AG04450 (cell line): ENCODE measurements at regions of chr20 and their contacts with region 1.

Region 1: GRCh38 chr20:41232973-41233926 is 84.3 kb downstream of the ZHX3 start:
- DNase-seq: peak; percentile 86
- H3K4me3 ChIP-seq: no peak overlapping the region
- H3K27ac ChIP-seq: peak overlapping the region; percentile 86
- H3K27me3 ChIP-seq: no peaks in the 10 kb centered on the region
- CTCF ChIP-seq: no peak

Region 2: DNA sequence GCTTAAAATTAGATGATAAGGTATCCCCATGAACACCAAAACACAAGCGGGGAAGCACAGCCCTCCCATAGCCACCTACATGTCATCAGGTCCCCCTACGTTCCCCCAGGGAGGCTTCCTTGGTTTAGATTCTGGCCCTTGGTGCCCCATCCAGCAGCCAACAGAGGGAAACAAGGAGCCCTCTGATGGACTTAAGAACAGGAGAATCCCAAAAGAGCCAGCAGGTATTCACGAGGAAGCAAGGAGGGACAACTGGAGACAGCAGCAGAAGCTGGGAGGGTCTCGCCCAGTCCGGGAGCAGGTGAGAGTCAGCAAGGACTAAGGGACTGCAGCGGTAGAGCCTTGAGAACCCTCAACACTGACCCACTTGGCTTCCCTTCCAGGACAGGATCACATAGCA is 263.0 kb before region 1 on chr20:
- CTCF ChIA-PET with region 1: interaction called, 12 read pairs
- POLR2A ChIA-PET with region 1: no interaction called
- DNase-seq: no peak
- H3K4me3 ChIP-seq: no peak overlapping the region
- H3K27ac ChIP-seq: no peak overlapping the region
- H3K27me3 ChIP-seq: no peaks in the 10 kb centered on the region
- CTCF ChIP-seq: peak; percentile 28; the same call in 1 of the 2 replicates

Region 3: DNA sequence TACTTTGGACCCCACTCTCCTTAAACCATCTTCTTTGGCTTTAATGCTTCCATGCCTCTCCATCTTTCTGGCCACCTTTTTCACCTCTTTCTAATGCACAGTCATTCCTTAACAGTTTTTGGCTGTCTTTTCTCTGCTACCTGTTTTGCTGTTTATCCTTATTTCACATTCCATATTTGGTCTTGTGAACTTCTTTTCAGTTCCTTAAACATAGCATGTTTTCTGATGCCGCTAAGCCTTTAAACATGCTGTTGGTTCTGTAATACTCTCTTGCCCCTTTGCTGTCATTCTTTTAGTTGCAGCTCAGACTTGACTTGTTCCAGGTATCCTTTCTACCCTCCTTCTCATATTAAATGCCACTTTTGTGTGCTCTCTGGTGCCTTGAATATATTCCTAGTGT is 168.9 kb before region 1 on chr20:
- CTCF ChIA-PET with region 1: no interaction called
- POLR2A ChIA-PET with region 1: no interaction called
- DNase-seq: no peak
- H3K4me3 ChIP-seq: no peak overlapping the region
- H3K27ac ChIP-seq: no peak overlapping the region
- H3K27me3 ChIP-seq: no peaks in the 10 kb centered on the region
- CTCF ChIP-seq: no peak

Region 4: DNA sequence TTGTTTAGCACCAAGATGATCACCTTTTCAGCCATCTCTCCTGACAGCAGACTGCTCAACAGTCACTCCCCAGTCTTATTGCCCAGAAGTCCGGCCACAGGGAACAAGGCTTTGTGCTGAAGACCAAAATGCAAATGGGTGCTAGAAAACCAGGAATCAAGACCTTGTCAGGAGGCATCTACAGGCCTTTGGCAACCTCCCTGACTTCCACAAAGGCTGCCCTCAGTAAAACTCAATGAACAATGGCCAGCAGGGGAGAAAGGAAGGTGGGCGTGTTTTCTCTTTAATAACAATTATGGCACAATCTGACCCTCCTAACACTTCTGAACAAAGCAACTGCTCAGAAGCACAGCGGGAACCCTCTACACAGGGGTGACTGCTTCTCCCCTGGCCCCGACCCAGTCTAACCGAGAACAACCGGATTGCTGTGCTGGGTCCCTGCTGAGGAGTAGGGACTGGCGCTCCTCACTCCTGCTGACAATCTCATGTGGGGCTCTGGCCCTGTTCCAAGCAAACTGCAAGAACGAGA is 54.3 kb before region 1 on chr20:
- CTCF ChIA-PET with region 1: interaction called, 13 read pairs
- POLR2A ChIA-PET with region 1: interaction called, 6 read pairs
- DNase-seq: no peak
- H3K4me3 ChIP-seq: no peak overlapping the region
- H3K27ac ChIP-seq: no peak overlapping the region
- H3K27me3 ChIP-seq: no peaks in the 10 kb centered on the region
- CTCF ChIP-seq: no peak

Region 5: DNA sequence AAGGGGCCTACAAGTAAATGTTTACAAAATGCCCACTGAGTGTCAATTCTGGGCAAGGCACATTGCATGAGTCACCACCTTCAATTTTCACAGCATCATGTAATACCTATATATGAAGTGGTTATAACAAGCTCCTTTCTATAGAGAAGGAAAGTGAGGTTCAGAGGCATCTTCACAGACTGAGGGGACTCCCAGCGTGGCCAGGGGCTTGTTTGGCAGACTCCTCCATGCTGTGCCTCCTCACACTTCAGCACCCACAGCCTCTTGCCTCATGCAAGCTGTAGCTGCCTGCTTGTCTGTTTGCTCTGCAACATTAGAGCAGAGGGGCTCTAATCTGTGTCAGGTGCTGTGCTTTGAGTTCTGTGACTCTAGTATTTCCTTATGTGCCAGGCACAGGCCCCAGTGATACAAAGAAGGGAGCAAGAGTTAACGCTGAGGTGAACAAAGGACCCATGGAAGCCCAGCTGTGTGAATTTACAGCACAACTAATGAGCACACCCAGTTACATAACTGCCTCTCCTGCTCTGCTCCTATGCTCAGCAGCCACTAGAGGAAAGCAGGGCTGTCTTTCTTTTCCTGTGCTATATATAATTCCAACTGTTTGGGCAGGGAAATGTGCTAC is 11.9 kb after region 1 on chr20:
- CTCF ChIA-PET with region 1: interaction called, 21 read pairs
- POLR2A ChIA-PET with region 1: interaction called, 5 read pairs
- DNase-seq: no peak
- H3K4me3 ChIP-seq: no peak overlapping the region
- H3K27ac ChIP-seq: no peak overlapping the region
- H3K27me3 ChIP-seq: no peaks in the 10 kb centered on the region
- CTCF ChIP-seq: peak; percentile 14; the same call in 1 of the 2 replicates

Region 6: DNA sequence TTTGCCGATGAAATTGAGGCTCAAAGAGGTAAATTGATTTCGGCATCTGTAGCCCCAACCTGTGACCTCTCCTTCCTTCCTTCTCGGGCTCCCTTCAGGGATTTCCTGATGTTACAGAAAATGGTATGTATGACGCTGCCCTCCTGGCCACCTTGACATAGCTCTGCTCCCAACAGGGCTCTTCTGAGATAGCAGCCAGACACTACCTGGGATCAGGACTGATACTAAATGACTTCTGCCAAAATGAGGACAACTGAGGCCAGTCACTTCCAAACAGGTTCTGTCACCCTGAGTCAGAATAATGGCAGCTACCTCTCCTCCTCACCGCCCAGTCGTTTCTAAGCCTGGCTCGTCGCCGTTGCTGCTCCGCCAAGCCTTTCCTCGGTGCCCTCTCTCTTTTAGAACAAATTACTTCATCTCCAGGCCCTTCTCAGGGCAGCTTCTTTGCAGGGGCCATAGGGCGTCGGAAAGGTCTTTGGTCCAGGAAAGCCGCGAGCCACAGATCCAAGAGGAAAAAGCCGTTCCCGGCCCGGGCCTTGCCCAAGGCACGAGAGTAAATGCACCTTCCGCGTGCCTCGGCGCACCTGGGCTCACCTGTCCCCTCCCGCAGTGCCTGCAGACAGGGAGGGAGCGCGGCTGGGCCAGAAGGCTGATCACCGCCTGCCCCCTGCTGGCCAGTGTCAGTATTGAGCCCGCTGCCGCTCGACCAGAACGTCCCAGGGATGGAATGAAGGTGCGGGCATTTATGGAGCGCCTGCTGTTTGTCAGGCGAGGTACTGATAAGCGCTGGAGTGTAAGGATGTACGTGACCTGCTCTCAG is 106.5 kb after region 1 on chr20:
- CTCF ChIA-PET with region 1: interaction called, 26 read pairs
- POLR2A ChIA-PET with region 1: no interaction called
- DNase-seq: no peak
- H3K4me3 ChIP-seq: peak overlapping the region; percentile 49
- H3K27ac ChIP-seq: peak overlapping the region; percentile 47
- H3K27me3 ChIP-seq: no peaks in the 10 kb centered on the region
- CTCF ChIP-seq: peak; percentile 94

Region 7: DNA sequence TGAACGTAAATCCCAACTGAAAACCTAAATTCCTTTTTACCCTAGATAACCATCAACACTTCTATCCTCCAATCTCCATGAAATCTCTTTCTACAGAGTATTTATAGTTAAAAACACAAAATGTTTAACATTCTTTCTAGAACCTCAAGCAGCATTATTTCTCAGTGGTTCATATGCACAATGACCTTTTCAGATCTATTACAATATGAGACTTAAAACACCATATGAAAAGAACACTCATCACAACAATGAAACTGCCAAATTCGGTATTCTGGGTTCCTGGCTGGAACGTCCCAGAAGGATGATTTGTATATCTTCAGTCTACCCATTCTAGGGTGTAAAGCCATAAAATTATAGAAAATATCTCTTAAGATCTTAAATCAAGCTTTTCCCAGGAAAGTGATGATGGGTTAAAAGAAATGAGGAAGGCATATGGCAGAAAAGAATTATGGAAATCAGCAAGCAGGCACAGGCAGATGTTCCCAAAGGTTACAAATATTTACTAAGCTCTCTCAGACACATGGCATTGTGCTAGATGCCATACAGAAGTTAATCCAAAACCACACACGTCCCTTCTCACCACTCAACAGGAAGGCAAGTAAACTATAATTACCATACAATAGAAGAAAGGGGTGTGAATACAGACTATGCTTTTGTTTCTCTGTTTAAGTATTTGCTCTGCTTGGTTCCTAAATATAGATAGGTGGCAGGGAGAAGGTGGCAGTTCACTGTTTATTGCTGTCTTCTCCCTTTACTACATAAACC is 266.9 kb after region 1 on chr20:
- CTCF ChIA-PET with region 1: no interaction called
- POLR2A ChIA-PET with region 1: no interaction called
- DNase-seq: no peak
- H3K4me3 ChIP-seq: no peak overlapping the region
- H3K27ac ChIP-seq: no peak overlapping the region
- H3K27me3 ChIP-seq: no peaks in the 10 kb centered on the region
- CTCF ChIP-seq: no peak